ENCODE measurements at regions of chr17 and their contacts with region 1.

Region 1: DNA sequence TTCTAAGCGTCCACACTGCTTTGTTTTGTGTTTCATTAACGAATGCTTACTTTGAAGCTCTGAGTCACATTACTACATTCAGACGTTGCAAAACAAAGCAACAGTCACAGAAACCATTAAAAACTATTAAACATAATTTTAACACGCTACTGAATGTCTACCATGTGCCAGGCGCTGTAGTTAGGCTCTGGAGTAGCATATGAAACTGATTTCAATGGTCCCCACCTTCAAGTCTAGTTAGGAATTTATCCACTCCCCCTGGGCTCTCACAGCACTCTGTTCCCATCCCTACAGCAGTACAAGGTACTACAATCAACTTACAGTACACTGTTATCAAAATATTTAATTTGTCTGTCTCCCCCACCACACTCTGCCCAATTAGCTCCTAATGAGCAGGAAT is 631 bp downstream of the UTP6 start:
- DNase-seq: no peak
- ATAC-seq: peak in 1 of 4 donors; percentile 9
- H3K4me3 ChIP-seq: peak overlapping the region; percentile 94
- H3K27ac ChIP-seq: peak overlapping the region; percentile 86
- H3K4me1 ChIP-seq: no peaks in the 10 kb centered on the region
- H3K27me3 ChIP-seq: no peaks in the 10 kb centered on the region
- CTCF ChIP-seq: no peak

Region 2: DNA sequence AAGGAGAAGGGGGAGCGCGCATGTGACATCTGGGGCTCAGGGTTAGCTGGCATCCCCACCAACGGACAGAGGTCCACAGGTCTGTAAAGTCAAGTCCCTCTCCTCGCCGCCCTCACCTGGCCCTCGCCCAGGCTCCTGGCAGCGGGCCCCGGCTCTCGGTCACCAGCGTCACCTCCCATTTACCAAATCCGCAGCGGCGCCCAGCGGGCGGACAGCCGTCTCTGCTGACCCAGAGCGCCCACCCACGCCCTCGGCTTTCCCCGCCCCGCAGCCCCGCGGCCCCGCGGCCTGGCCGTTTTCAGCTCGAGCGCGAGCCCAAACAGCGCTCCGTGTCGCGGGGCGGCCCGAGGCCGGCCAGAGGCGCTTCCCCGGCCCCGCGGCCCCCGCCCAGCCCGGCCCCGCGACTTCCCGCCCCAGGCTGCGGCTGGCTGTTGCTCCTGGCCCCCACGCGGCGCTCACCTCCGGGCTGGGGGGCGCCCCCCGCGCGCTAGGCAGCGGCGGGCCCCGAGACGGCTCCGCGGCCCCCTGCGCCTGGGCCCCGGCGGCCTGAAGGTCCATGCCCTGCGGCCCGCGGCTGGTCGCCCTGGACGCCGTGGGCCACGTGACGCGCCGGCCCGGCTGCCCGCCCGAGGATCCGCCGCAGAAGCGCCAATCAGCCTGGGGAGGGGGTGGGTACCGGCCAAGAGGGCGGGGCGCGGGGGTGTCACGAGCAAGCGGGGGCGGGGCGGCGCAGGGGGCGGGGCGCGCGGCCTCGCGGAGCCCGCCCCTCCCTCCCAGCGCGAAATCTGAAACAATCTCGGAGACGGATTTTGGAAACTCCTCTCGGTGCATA is 42.0 kb before region 1 on chr17 and contains the start of gene COPRS:
- intact Hi-C with region 1: loop called in 1 of 2 experiments (anchors 5 kb)
- DNase-seq: peak; percentile 92 to 96
- ATAC-seq: peak; percentile 94 to 96 (median 96)
- H3K4me3 ChIP-seq: peak within 1 kb of the TSS; percentile 70
- H3K27ac ChIP-seq: peak within 1 kb of the TSS; percentile 80
- H3K4me1 ChIP-seq: peaks cover 10% of the 10 kb centered on the region
- H3K27me3 ChIP-seq: no peaks in the 10 kb centered on the region
- CTCF ChIP-seq: no peak
- total RNA-seq, gene COPRS: 35.2 to 54.5 (median 39.4) TPM

Region 3: DNA sequence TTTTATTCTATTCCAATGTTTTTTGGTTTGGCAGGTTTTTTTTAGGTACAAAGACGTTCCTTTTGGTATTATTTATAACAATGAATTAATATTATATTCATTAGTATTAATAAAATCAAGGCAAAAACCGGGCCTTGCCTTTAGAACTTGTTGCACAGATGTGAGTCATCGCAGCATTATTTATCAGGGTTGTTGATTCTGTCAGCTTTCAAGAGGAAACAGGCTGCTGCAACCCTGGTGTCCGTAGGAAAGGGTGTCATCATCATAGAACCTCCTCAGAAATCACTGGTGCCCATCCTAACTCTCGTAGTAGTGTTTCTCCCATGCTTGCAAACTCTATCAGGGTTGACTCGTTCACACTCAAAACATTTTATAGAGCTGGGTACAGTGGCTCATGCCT is 96.1 kb after region 1 on chr17:
- intact Hi-C with region 1: loop called in 1 of 2 experiments (anchors 10 kb)
- DNase-seq: no peak
- ATAC-seq: no peak
- H3K4me3 ChIP-seq: no peak overlapping the region
- H3K27ac ChIP-seq: no peak overlapping the region
- H3K4me1 ChIP-seq: no peaks in the 10 kb centered on the region
- H3K27me3 ChIP-seq: no peaks in the 10 kb centered on the region
- CTCF ChIP-seq: no peak

Region 4: GRCh38 chr17:32191306-32191705 is 290.4 kb after region 1 on chr17:
- intact Hi-C with region 1: loop called in 1 of 2 experiments (anchors 10 kb)
- DNase-seq: no peak
- ATAC-seq: no peak
- H3K4me3 ChIP-seq: no peak overlapping the region
- H3K27ac ChIP-seq: no peak overlapping the region
- H3K4me1 ChIP-seq: no peaks in the 10 kb centered on the region
- H3K27me3 ChIP-seq: no peaks in the 10 kb centered on the region
- CTCF ChIP-seq: no peak

Measured in psoas muscle (tissue), 8 donors.